Activated T-helper 2 cell treated with anti-CD3 and anti-CD28 coated beads, Interferon-gamma antibody, Interleukin-2, Interleukin-4, amounts not matched to agents 10 μg/mL and 5 μg/mL and 100 μg/mL, durations not matched to agents 14 hours and 24 hours and 36 hours (primary cell): ENCODE measurements at regions of chr2 and their contacts with region 1.

Region 1: GRCh38 chr2:37585982-37586621 is 85.3 kb downstream of the CDC42EP3 start:
- DNase-seq: peak; percentile 58
- H3K4me3 Mint-ChIP-seq: peak overlapping the region; percentile 30
- H3K27ac Mint-ChIP-seq: peak overlapping the region; percentile 76
- H3K4me1 Mint-ChIP-seq: peaks cover 77% of the 10 kb centered on the region
- H3K27me3 Mint-ChIP-seq: no peaks in the 10 kb centered on the region

Region 2: GRCh38 chr2:37231241-37232130 is 354.6 kb before region 1 on chr2 and contains the starts of genes CEBPZ and NDUFAF7:
- intact Hi-C with region 1: loop called (anchors 5 kb)
- DNase-seq: peak; percentile 81
- H3K4me3 Mint-ChIP-seq: no peak within 1 kb of the TSS
- H3K27ac Mint-ChIP-seq: no peak within 1 kb of the TSS
- H3K4me1 Mint-ChIP-seq: peaks cover 24% of the 10 kb centered on the region
- H3K27me3 Mint-ChIP-seq: no peaks in the 10 kb centered on the region
- total RNA-seq, gene CEBPZ: 59.3 and 61.8 TPM in 2 replicates
- total RNA-seq, gene NDUFAF7: 19.8 and 21.2 TPM in 2 replicates

Region 3: DNA sequence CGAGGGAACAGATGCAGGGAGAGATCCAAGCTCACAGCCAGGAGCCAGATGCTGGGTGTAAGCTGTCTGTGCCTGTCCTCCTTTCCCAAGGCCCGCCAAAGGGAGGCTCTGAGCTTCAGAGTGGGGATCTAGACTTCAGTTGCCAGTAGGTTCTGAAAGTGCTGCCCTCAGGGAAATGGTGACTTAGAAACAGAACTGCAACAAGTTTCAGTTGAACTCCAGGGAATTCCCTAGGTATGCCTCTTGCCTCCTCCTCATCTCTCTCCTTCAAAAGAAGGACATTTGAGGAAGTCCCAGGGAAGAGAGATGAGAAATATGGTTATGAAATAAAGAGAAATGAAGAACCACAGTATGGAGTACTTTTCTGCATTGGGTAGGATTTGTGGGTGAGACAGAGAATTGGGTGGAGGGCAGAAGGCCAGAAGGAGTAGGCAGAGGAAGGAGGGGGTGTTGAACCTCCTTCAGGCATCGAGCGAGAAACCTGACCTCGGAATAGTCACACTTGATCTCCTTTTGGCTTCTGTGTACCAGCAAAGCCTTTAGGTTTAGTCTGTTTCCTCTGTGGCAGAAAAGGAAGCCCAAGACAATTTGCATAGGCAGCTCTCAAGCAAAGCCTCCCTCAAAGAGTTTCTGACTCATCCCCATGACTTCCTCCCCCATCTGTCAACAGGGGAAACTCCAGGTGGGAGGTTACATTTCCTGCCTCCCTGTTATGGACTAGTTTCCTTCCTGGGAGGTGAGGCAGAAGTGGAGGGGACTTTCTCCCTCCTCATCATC is 195.9 kb before region 1 on chr2:
- intact Hi-C with region 1: loop called (anchors 1 kb)
- DNase-seq: peak; percentile 59
- H3K4me3 Mint-ChIP-seq: peak overlapping the region; percentile 7
- H3K27ac Mint-ChIP-seq: peak overlapping the region; percentile 79
- H3K4me1 Mint-ChIP-seq: peaks cover 20% of the 10 kb centered on the region
- H3K27me3 Mint-ChIP-seq: peaks cover 10% of the 10 kb centered on the region

Region 4: GRCh38 chr2:37543999-37544557 is 42.0 kb before region 1 on chr2:
- intact Hi-C with region 1: no loop called
- DNase-seq: no peak
- H3K4me3 Mint-ChIP-seq: no peak overlapping the region
- H3K27ac Mint-ChIP-seq: no peak overlapping the region
- H3K4me1 Mint-ChIP-seq: no peaks in the 10 kb centered on the region
- H3K27me3 Mint-ChIP-seq: peaks cover 35% of the 10 kb centered on the region

Region 5: GRCh38 chr2:37600735-37601134 is 14.6 kb after region 1 on chr2:
- intact Hi-C with region 1: loop called (anchors 2 kb)
- DNase-seq: no peak
- H3K4me3 Mint-ChIP-seq: no peak overlapping the region
- H3K27ac Mint-ChIP-seq: no peak overlapping the region
- H3K4me1 Mint-ChIP-seq: peaks cover 38% of the 10 kb centered on the region
- H3K27me3 Mint-ChIP-seq: peaks cover 9% of the 10 kb centered on the region

Region 6: DNA sequence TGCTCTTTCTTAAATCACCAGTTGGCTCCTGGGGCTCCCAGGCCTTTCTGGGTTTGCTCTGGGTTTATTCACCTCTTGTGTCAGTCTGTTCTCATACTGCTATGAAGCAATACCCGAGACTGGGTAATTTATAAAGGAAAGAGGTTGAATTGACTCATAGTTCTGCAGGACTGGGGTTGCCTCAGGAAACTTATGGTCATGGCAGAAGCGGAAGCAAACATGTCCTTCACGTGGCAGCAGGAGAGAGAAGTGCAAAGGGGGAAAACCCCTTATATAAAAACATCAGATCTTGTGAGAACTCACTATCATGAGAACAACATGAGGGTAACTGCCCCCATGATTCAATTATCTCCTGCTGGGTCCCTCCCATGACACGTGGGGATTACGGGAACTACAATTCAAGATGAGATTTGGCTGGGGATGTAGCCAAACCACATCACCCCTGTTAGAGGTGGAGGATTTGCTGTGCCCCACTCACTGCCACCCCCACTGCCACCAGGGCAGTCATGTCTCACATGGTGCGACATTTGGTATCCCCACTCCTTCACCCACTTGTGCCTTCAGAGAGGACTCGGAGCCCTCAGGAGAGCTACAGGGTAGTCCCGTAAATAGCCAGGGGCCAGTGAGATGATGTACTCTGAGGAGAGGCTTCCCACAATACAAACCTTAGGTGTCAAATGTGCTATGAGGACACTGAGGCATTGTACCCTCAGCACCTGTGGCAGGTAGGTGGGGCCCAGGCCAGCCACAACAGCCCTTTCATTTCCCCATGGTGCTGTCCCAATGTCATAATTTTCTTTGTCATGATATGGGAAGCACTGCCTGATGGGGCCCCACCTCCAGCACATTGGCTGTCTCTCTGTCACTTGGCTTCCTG is 49.6 kb after region 1 on chr2:
- intact Hi-C with region 1: loop called (anchors 1 kb)
- DNase-seq: peak; percentile 61
- H3K4me3 Mint-ChIP-seq: no peak overlapping the region
- H3K27ac Mint-ChIP-seq: peak overlapping the region; percentile 74
- H3K4me1 Mint-ChIP-seq: peaks cover 44% of the 10 kb centered on the region
- H3K27me3 Mint-ChIP-seq: peaks cover 4% of the 10 kb centered on the region

Region 7: GRCh38 chr2:37711308-37711731 is 125.2 kb after region 1 on chr2:
- intact Hi-C with region 1: loop called (anchors 5 kb)
- DNase-seq: peak; percentile 46
- H3K4me3 Mint-ChIP-seq: no peak overlapping the region
- H3K27ac Mint-ChIP-seq: no peak overlapping the region
- H3K4me1 Mint-ChIP-seq: peaks cover 49% of the 10 kb centered on the region
- H3K27me3 Mint-ChIP-seq: peaks cover under 1% of the 10 kb centered on the region

Region 8: DNA sequence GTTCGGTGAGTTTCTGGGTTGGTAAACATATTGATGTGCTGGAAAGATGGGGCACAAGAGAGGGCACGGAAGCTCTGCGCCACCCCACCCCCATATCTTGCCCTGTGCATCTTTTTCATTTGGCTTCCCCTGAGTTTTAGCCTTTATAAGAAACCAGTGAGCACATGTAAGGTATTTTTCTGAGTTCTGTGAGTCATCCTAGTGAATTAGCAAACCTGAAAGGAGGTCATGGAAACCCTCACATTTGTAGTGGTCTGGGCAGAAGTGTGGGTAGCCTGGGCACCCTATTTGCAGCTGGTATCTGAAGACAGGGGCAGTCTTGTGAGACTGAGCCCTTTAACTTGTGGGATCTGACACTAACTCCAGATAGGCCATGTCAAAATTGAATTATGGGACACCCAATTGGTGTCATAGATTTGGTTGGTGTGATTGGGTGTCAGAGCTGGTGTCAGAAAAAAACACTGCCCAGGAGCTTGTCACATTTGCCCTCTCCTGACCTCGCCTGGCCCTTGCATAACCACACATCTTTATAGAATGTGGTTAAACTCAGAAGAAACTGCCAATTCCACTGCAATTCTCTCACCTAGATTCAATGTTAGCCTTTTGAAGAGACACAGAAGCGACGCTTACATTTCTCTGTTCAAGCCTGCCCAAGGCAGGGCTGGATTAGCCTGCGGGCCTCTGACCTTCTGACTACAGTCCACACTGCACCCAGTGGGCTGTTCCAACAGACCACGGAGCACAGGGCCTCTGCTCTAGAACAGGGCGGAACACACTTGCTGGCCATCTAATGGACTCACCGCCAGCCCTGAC is 1067.8 kb after region 1 on chr2:
- intact Hi-C with region 1: loop called (anchors 10 kb)
- DNase-seq: peak; percentile 49
- H3K4me3 Mint-ChIP-seq: peak overlapping the region; percentile 52
- H3K27ac Mint-ChIP-seq: peak overlapping the region; percentile 85
- H3K4me1 Mint-ChIP-seq: peaks cover 64% of the 10 kb centered on the region
- H3K27me3 Mint-ChIP-seq: no peaks in the 10 kb centered on the region